ENCODE measurements at regions of chr5 and their contacts with region 1.

Region 1: DNA sequence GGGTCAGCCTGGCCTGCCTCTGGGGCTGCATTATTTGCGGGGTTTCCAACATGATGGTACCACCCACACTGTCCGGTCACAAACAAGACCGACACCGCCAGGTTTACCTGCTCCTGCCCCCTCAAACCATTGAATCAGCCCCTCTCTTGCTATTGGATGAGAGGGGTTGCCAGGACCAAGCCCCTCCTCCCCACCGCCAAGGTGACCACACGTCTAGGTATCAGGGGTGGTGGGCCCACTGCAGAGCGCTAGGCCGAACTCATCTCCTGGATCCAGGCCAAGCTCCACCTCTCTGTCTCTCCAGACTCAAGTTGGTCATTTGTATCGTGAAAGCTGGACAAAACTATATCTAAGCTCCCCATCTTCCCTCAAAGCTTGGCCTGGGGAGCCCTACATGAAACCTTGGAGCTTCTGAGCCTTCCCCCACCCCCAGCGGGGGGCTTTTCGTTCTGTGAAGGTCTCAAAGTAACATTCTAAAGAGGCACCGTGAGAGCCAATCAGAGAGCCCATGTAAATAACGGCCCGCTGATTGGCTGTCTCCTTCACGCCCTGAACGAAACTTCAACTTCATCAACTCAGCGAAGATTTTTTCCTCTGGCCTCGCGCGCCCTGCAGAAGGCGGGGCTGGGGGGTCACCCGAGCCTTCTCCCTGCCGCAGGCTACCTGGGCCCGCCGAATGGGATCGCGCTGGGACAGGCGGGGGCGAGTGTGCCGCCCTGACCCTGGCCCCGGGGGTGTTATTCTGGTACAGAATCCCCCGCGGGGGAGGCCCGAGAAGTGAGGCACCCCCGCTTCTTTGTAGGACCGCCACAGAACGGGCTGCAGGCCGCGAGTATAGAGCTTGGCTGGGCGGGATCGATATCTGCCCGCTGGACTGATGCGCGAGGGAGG is 49.6 kb upstream of the PSD2 start:
- DNase-seq: peak; percentile 67
- H3K4me3 ChIP-seq: peak overlapping the region in 1 of 3 experiments; percentile 4
- H3K27ac ChIP-seq: no peak overlapping the region
- H3K4me1 ChIP-seq: peaks cover 18% of the 10 kb centered on the region
- H3K27me3 ChIP-seq: peaks cover 25 to 28% of the 10 kb centered on the region in 2 experiments
- CTCF ChIP-seq: no peak
- POLR2A ChIP-seq: no peak

Region 2: GRCh38 chr5:139755892-139756671 is 10.0 kb after region 1 on chr5:
- CTCF ChIA-PET with region 1: no interaction called
- POLR2A ChIA-PET with region 1: no interaction called
- dilution Hi-C with region 1: no loop called
- intact Hi-C with region 1: loop called (anchors 2 kb)
- DNase-seq: no peak
- H3K4me3 ChIP-seq: no peak overlapping the region
- H3K27ac ChIP-seq: no peak overlapping the region
- H3K4me1 ChIP-seq: no peaks in the 10 kb centered on the region
- H3K27me3 ChIP-seq: peaks cover 36 to 38% of the 10 kb centered on the region in 2 experiments
- CTCF ChIP-seq: no peak
- POLR2A ChIP-seq: no peak

Region 3: GRCh38 chr5:139925650-139926640 is 179.9 kb after region 1 on chr5:
- CTCF ChIA-PET with region 1: no interaction called
- POLR2A ChIA-PET with region 1: no interaction called
- dilution Hi-C with region 1: no loop called
- intact Hi-C with region 1: no loop called
- DNase-seq: no peak
- H3K4me3 ChIP-seq: no peak overlapping the region
- H3K27ac ChIP-seq: no peak overlapping the region
- H3K4me1 ChIP-seq: no peaks in the 10 kb centered on the region
- H3K27me3 ChIP-seq: peaks cover 19 to 30% of the 10 kb centered on the region in 2 experiments
- CTCF ChIP-seq: no peak
- POLR2A ChIP-seq: no peak

Region 4: GRCh38 chr5:139942243-139942642 is 196.2 kb after region 1 on chr5:
- CTCF ChIA-PET with region 1: no interaction called
- POLR2A ChIA-PET with region 1: no interaction called
- dilution Hi-C with region 1: no loop called
- intact Hi-C with region 1: no loop called
- DNase-seq: no peak
- H3K4me3 ChIP-seq: no peak overlapping the region
- H3K27ac ChIP-seq: no peak overlapping the region
- H3K4me1 ChIP-seq: no peaks in the 10 kb centered on the region
- H3K27me3 ChIP-seq: peaks cover 2 to 28% of the 10 kb centered on the region in 2 experiments
- CTCF ChIP-seq: no peak
- POLR2A ChIP-seq: no peak

Measured in endothelial cell of umbilical vein (primary cell).